CD4-positive, alpha-beta T cell (primary cell): ENCODE measurements at regions of chr1 and their contacts with region 1.

Region 1: DNA sequence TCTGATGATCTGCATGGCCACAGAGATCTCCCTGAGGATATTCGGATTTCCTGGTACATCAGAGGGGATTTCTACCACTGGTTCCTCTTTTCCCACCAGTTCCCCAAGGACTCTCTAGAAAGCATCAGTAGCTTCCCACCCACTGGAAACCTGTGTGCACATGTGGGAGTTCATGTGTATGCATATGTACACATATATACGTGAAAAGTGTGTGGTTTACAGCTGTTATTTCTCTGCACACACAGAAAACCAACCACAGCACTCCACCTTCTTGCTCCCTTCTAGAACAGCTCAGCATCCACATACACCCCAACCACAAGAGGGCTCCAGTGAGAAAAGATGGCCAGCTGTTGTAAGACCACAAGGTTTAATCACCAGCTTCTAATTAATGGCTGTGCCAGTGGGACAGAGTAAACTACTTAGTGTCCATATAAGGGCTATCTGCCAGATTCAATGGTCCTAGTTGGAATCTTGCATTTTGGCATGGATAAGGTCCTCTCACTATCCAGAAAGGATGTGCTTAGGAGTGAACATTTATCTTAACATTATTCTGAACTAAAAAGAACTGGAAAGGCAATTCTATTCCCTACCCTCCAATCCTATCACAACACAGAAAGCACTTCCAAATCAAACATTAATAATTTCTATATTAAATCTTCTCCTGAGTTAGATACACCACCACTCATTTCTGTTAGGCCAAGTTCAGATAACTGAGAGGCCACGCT is 24.1 kb downstream of the GPR3 start:
- DNase-seq: peak in 10 of 14 experiments; percentile 28 to 81 (median 49)
- ATAC-seq: peak; percentile 73
- H3K4me3 ChIP-seq: no peak overlapping the region
- H3K4me3 Mint-ChIP-seq: no peak overlapping the region
- H3K27ac ChIP-seq: no peak overlapping the region
- H3K27ac Mint-ChIP-seq: peak overlapping the region; percentile 54
- H3K4me1 ChIP-seq: peaks cover 18% of the 10 kb centered on the region
- H3K4me1 Mint-ChIP-seq: peaks cover 46% of the 10 kb centered on the region
- H3K27me3 ChIP-seq: no peaks in the 10 kb centered on the region
- H3K27me3 Mint-ChIP-seq: no peaks in the 10 kb centered on the region
- CTCF ChIP-seq: peak; percentile 60

Region 2: GRCh38 chr1:27071049-27071416 is 345.5 kb before region 1 on chr1:
- CTCF ChIA-PET with region 1: no interaction called
- POLR2A ChIA-PET with region 1: no interaction called
- intact Hi-C with region 1: no loop called
- DNase-seq: no peak
- ATAC-seq: no peak
- H3K4me3 ChIP-seq: no peak overlapping the region
- H3K4me3 Mint-ChIP-seq: no peak overlapping the region
- H3K27ac ChIP-seq: no peak overlapping the region
- H3K27ac Mint-ChIP-seq: no peak overlapping the region
- H3K4me1 ChIP-seq: no peaks in the 10 kb centered on the region
- H3K4me1 Mint-ChIP-seq: no peaks in the 10 kb centered on the region
- H3K27me3 ChIP-seq: peaks cover 0 to 2% of the 10 kb centered on the region in 2 experiments
- H3K27me3 Mint-ChIP-seq: no peaks in the 10 kb centered on the region
- CTCF ChIP-seq: no peak

Region 3: GRCh38 chr1:27287791-27288190 is 128.8 kb before region 1 on chr1:
- CTCF ChIA-PET with region 1: no interaction called
- POLR2A ChIA-PET with region 1: no interaction called
- intact Hi-C with region 1: no loop called
- DNase-seq: no peak
- ATAC-seq: no peak
- H3K4me3 ChIP-seq: no peak overlapping the region
- H3K4me3 Mint-ChIP-seq: no peak overlapping the region
- H3K27ac ChIP-seq: no peak overlapping the region
- H3K27ac Mint-ChIP-seq: no peak overlapping the region
- H3K4me1 ChIP-seq: no peaks in the 10 kb centered on the region
- H3K4me1 Mint-ChIP-seq: peaks cover 6% of the 10 kb centered on the region
- H3K27me3 ChIP-seq: no peaks in the 10 kb centered on the region
- H3K27me3 Mint-ChIP-seq: no peaks in the 10 kb centered on the region
- CTCF ChIP-seq: no peak

Region 4: DNA sequence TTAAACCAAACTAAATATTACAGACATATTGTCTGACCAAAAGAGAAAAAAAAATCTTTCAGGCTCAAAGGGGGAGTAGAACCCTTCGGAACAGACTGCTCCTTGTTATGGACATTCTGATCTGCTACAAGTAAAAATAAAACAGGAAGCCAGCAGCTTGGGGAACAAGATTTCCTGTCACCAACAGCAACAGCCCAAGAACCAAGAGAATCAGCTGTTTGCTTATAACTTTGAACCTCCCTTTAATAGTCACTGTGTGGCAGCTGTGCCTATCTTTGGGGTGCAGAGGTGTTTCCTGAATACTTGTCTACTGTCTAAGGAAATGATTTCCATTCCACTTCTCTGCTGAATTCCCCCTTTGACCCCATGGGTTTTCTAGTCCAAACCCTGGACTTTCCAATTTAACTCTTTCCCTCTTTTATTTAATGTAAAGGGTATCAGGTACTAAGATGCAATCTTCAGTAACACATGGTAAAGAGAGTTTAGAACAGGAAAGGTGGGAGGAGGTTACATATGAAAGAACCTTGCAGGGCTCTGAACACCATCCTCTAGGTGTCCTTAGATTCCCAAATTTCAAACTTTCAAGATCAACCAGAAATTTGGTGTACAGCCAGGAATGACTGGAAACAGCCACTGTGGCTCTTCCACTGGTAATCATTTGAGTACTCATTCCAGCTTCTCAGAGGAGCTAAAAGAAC is 14.5 kb after region 1 on chr1:
- CTCF ChIA-PET with region 1: interaction called, 10 read pairs
- POLR2A ChIA-PET with region 1: interaction called, 12 read pairs
- intact Hi-C with region 1: no loop called
- DNase-seq: peak in 9 of 14 experiments; percentile 7 to 83 (median 19)
- ATAC-seq: peak; percentile 87
- H3K4me3 ChIP-seq: peak overlapping the region; percentile 16
- H3K4me3 Mint-ChIP-seq: peak overlapping the region; percentile 74
- H3K27ac ChIP-seq: peak overlapping the region; percentile 46 to 56
- H3K27ac Mint-ChIP-seq: peak overlapping the region; percentile 86
- H3K4me1 ChIP-seq: peaks cover 90% of the 10 kb centered on the region
- H3K4me1 Mint-ChIP-seq: peaks cover 87% of the 10 kb centered on the region
- H3K27me3 ChIP-seq: no peaks in the 10 kb centered on the region
- H3K27me3 Mint-ChIP-seq: no peaks in the 10 kb centered on the region
- CTCF ChIP-seq: peak; percentile 4

Region 5: DNA sequence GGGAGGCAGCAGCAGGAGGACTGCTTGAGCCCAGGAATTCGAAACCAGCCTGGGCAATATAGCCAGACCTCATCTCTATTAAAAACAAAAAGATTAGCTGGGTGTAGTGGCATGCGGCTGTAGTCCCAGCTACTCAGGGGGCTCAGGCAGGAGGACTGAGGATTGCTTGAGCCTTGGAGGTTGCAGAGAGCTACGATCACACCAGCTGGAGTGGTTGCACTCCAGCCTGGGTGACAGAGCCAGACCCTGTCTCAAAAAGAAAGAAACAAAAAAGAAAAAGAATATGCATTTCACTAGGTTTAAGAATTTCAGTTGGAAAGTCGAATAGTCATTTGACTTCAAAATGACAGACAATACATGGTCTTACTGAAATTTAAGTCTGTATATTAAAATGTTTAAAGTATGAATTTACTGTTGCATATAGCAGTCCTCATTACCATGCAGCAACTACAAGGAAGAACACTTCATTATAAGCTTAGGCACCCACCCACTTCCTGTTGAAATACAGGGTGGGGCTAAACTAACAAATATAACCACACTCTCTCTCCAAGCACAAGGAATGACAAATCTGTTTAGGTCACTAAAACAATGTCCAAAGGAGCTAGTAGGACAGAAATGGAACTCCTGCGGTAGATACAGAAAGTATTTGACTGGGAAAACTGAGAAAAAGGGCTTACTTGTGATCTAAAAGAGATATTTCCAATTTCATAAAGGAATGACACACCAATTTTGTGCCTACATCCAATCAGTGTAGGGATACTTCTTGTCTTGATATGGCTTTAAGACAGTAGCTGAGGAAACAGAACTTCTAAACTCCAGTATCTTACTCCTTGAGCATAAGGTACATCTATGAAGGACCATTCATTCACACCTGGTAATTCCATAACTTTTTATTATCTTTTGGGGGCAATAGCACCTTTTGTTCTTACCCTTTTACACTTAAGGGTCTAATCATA is 19.9 kb after region 1 on chr1:
- CTCF ChIA-PET with region 1: interaction called, 10 read pairs
- POLR2A ChIA-PET with region 1: interaction called, 12 read pairs
- intact Hi-C with region 1: no loop called
- DNase-seq: peak in 4 of 14 experiments; percentile 34 to 78 (median 64)
- ATAC-seq: peak; percentile 96
- H3K4me3 ChIP-seq: peak overlapping the region; percentile 21
- H3K4me3 Mint-ChIP-seq: peak overlapping the region; percentile 73
- H3K27ac ChIP-seq: peak overlapping the region; percentile 54 to 65
- H3K27ac Mint-ChIP-seq: peak overlapping the region; percentile 80
- H3K4me1 ChIP-seq: peaks cover 69% of the 10 kb centered on the region
- H3K4me1 Mint-ChIP-seq: peaks cover 75% of the 10 kb centered on the region
- H3K27me3 ChIP-seq: no peaks in the 10 kb centered on the region
- H3K27me3 Mint-ChIP-seq: no peaks in the 10 kb centered on the region
- CTCF ChIP-seq: no peak

Region 6: GRCh38 chr1:27473755-27474154 is 57.2 kb after region 1 on chr1:
- CTCF ChIA-PET with region 1: interaction called, 3 read pairs
- POLR2A ChIA-PET with region 1: no interaction called
- intact Hi-C with region 1: loop called in 1 of 2 experiments (anchors 10 kb)
- DNase-seq: peak in 2 of 14 experiments; percentile 3 to 18
- ATAC-seq: peak; percentile 32
- H3K4me3 ChIP-seq: no peak overlapping the region
- H3K4me3 Mint-ChIP-seq: peak overlapping the region; percentile 16
- H3K27ac ChIP-seq: no peak overlapping the region
- H3K27ac Mint-ChIP-seq: peak overlapping the region; percentile 57
- H3K4me1 ChIP-seq: peaks cover 59% of the 10 kb centered on the region
- H3K4me1 Mint-ChIP-seq: peaks cover 73% of the 10 kb centered on the region
- H3K27me3 ChIP-seq: no peaks in the 10 kb centered on the region
- H3K27me3 Mint-ChIP-seq: no peaks in the 10 kb centered on the region
- CTCF ChIP-seq: no peak